Calu3 (cell line): ENCODE measurements at regions of chr7 and their contacts with region 1.

Region 1: DNA sequence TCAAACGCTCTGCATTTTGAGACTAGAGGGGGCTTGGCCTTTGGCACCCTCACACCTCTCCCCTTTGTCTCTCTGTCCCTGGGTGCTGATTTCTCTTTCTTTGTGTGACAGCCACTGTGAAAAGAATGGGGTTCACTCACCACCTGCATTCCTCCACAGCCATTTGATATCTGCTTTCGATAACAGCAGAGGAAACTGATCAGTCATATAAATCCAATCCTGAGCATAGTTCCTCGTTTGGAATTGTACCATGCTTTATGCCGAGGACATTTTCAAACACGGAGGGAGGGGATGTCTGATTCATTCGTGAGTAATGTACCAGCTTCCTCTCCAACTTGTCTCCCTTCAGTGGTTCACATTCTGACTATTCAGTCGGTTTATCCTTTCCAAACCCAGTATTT is 15.8 kb downstream of the MET start:
- DNase-seq: peak; percentile 45
- H3K4me3 Mint-ChIP-seq: peak overlapping the region; percentile 51
- H3K27ac Mint-ChIP-seq: peak overlapping the region; percentile 68
- H3K4me1 Mint-ChIP-seq: peaks cover 85% of the 10 kb centered on the region
- H3K27me3 Mint-ChIP-seq: no peaks in the 10 kb centered on the region
- CTCF ChIP-seq: no peak

Region 2: DNA sequence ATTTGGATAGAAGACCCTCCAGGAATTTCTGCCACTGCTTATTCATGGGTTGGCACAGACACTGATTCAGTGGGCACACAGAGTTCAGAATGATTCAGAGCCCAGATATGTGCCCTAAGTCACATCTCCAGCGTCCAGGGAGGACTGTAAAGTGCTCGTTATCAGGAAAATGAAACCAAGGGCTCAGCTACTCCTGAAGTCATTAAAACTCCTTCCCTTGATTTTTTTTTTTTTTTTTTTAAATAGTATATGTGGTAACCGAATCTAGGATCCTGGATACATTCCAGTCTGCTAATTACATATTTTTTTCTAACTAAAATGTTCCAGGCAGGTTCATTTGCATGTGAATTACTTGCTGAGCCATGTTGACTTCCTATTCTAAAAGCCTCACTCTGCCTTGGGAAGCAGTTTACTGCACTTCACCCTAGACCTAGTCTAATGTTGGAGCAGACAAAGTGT is 18.9 kb after region 1 on chr7:
- CTCF ChIA-PET with region 1: interaction called, 4 read pairs
- intact Hi-C with region 1: loop called (anchors 2 kb)
- DNase-seq: peak; percentile 45
- H3K4me3 Mint-ChIP-seq: peak overlapping the region; percentile 55
- H3K27ac Mint-ChIP-seq: peak overlapping the region; percentile 82
- H3K4me1 Mint-ChIP-seq: peaks cover 82% of the 10 kb centered on the region
- H3K27me3 Mint-ChIP-seq: no peaks in the 10 kb centered on the region
- CTCF ChIP-seq: no peak

Region 3: DNA sequence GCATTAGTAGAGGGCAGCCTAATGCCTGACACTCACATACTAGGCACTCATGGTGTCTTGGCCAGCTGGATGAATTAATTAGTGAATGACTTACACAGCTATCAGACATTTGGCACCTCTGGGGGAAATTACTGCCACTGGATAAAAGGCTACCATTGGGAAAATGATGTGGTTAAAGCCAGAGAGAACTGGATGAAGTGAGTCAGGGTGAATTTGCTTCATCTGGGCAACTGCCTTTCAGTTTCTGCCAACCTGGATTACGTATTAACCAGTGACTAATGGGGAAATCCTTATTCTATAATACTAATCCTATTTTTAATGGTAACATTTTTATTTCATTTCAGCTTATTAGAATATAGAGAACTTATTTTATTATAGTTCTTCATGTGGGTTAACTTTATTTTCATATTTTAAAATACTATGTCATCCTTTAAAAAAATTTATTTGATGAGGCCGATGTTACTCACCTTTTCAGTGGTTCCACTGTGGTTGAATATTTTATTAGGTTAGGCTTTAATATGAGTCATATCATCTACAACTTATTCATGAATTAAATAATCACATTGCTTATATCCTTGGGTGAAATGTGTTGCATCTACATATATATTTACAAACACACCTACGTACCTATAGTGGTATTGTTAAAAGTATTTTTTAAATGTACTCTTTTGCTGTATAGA is 88.9 kb after region 1 on chr7:
- CTCF ChIA-PET with region 1: interaction called, 4 read pairs
- intact Hi-C with region 1: loop called (anchors 5 kb)
- DNase-seq: peak; percentile 67
- H3K4me3 Mint-ChIP-seq: peak overlapping the region; percentile 20
- H3K27ac Mint-ChIP-seq: peak overlapping the region; percentile 92
- H3K4me1 Mint-ChIP-seq: peaks cover 89% of the 10 kb centered on the region
- H3K27me3 Mint-ChIP-seq: no peaks in the 10 kb centered on the region
- CTCF ChIP-seq: no peak

Region 4: GRCh38 chr7:116802746-116803152 is 114.9 kb after region 1 on chr7:
- CTCF ChIA-PET with region 1: no interaction called
- intact Hi-C with region 1: loop called (anchors 5 kb)
- DNase-seq: peak; percentile 48
- H3K4me3 Mint-ChIP-seq: peak overlapping the region; percentile 16
- H3K27ac Mint-ChIP-seq: peak overlapping the region; percentile 84
- H3K4me1 Mint-ChIP-seq: peaks cover 60% of the 10 kb centered on the region
- H3K27me3 Mint-ChIP-seq: no peaks in the 10 kb centered on the region
- CTCF ChIP-seq: no peak